ENCODE measurements at regions of chr10 and their contacts with region 1.

Region 1: DNA sequence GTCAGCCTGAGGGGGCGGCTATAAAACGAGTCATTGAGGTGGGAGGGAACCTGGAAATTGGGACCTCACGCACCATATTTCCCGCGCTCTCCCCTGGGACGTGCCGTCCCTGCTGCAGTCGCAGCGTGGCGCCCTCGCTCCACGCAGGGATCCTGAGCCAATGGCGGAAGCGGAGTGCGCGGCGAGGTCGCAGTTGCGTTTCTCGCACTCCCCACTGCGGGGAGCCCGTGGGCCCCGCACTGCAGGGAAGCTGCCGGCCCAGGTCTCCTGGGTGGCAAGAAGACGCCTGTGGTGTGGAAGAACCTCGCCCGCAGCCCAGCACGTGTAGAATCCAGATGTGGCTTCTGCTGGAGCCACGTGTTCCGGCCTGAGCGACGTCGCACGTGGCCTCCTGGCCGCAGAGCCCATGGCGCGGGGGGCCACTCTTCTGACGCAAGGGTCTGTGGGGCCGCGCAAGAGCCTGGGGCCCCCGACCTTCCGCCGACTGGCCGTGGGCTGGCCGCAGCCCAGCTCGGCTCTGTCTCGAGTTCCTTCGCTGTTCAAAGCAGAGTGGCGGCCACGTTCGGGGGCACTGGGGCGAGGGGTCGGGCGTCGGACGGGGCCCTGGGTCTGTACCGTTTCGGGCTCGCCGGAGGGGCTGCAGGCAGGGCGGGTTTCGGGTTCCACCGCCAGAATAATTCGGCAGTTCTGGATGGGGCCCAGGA is 26.4 kb downstream of the HIF1AN start:
- DNase-seq: peak; percentile 70 to 83 (median 80)
- ATAC-seq: peak; percentile 99
- H3K4me3 ChIP-seq: peak overlapping the region; percentile 25
- H3K4me3 Mint-ChIP-seq: peak overlapping the region; percentile 46 to 78 (median 70)
- H3K27ac ChIP-seq: no peak overlapping the region
- H3K27ac Mint-ChIP-seq: no peak overlapping the region
- H3K4me1 ChIP-seq: peaks cover 5 to 7% of the 10 kb centered on the region in 2 donors
- H3K4me1 Mint-ChIP-seq: peaks cover 0 to 28% (median 11%) of the 10 kb centered on the region in 7 donors
- H3K27me3 ChIP-seq: no peaks in the 10 kb centered on the region
- H3K27me3 Mint-ChIP-seq: peaks cover 17 to 41% (median 25%) of the 10 kb centered on the region in 5 donors

Region 2: DNA sequence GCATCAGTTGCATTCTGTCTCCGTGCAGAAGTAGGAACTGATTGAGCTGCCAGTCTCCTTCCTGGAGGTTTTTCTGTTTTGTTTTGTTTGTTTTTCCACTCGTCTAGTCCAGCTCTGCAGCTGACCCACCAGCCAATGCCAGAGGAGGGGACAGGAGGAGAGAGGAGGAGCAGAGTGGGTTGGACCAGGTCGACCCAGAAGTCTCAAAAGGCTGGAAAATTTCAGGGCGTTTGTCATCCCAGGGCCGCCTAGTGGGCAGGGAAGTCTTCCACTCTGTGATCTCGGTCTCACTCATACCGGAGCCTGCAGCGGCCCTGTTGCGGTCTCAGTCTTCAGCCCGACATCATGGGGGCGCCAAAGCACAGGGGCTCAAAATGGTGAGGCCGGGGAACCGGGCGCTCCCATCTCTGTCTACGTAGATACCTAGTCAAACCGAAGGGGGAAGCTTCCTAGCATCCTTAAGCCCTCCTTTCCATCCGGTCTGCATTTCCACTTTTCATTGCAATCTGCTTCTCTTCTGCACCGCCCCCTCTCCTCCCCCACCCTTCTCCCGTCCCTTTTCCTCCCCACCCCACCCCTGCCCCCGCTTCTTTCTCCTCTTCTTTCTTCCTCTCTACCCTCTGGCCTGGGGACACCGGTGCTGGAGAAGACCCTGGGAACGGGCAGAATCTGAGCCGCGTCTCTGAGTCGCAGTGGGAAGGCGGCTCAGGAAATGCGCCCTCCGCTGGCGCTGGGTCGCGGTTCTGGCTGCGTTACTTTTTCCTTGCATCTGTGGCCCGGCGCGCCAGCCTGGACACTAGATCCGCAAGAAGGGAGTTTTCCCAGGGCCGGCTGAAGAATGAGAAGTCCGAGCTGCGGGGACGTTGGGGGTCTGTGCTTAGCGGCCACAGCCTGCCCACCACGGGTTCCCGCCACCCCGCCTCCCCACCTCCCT is 167.0 kb after region 1 on chr10:
- CTCF ChIA-PET with region 1: no interaction called
- POLR2A ChIA-PET with region 1: no interaction called
- intact Hi-C with region 1: loop called in 1 of 2 experiments (anchors 5 kb)
- DNase-seq: no peak
- ATAC-seq: no peak
- H3K4me3 ChIP-seq: no peak overlapping the region
- H3K4me3 Mint-ChIP-seq: peak overlapping the region in 9 of 10 donors; percentile 21 to 82 (median 67)
- H3K27ac ChIP-seq: no peak overlapping the region
- H3K27ac Mint-ChIP-seq: no peak overlapping the region
- H3K4me1 ChIP-seq: peaks cover 13 to 18% of the 10 kb centered on the region in 2 donors
- H3K4me1 Mint-ChIP-seq: peaks cover 8 to 26% (median 22%) of the 10 kb centered on the region in 7 donors
- H3K27me3 ChIP-seq: peaks cover 2 to 9% of the 10 kb centered on the region in 2 donors
- H3K27me3 Mint-ChIP-seq: peaks cover 86 to 92% (median 88%) of the 10 kb centered on the region in 5 donors

Region 3: GRCh38 chr10:100827819-100828737 is 265.9 kb after region 1 on chr10:
- CTCF ChIA-PET with region 1: interaction called, 3 read pairs
- POLR2A ChIA-PET with region 1: no interaction called
- intact Hi-C with region 1: loop called in 1 of 2 experiments (anchors 1 kb)
- DNase-seq: peak in 3 of 9 donors; percentile 18 to 36 (median 29)
- ATAC-seq: peak; percentile 37
- H3K4me3 ChIP-seq: peak overlapping the region; percentile 56
- H3K4me3 Mint-ChIP-seq: peak overlapping the region; percentile 85 to 97 (median 88)
- H3K27ac ChIP-seq: no peak overlapping the region
- H3K27ac Mint-ChIP-seq: peak overlapping the region in 2 of 9 donors; percentile 14 to 50
- H3K4me1 ChIP-seq: peaks cover 9% of the 10 kb centered on the region in 2 donors
- H3K4me1 Mint-ChIP-seq: peaks cover 25 to 45% (median 31%) of the 10 kb centered on the region in 7 donors
- H3K27me3 ChIP-seq: peaks cover 11 to 34% of the 10 kb centered on the region in 2 donors
- H3K27me3 Mint-ChIP-seq: peaks cover 26 to 86% (median 47%) of the 10 kb centered on the region in 5 donors

Region 4: DNA sequence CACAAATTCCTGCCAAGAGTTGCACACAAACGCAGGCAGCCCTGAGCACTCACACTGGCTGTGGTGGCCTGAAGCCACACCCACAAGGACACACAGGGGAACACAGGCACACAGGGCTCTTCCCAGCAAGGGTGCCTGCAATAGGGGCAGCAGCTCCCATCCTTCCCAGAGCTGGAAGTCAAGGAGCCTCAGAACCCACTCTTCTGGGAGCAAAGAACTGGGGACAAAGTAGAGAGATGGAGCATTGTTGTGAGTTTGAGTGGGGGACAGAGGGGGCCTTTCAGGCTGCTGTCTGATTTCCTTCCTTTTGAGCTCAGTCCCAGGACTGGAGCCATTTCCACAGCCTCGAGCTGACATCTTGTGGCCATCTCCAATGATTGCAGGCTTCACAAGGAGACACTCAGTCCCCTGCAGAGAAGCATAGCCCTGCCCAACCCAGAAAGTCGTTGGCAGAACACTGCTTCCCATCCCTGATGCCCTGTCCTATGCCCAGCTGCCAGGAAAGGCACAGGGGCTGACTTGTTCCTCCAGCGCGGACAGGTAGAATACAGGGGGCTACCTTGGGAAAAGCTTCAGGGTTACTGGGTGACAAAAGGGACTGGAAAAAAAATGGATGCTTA is 316.2 kb after region 1 on chr10:
- CTCF ChIA-PET with region 1: interaction called, 4 read pairs
- POLR2A ChIA-PET with region 1: no interaction called
- intact Hi-C with region 1: loop called (anchors 1 to 2 kb)
- DNase-seq: peak in 2 of 9 donors; percentile 7 to 26
- ATAC-seq: no peak
- H3K4me3 ChIP-seq: no peak overlapping the region
- H3K4me3 Mint-ChIP-seq: no peak overlapping the region
- H3K27ac ChIP-seq: no peak overlapping the region
- H3K27ac Mint-ChIP-seq: peak overlapping the region in 1 of 9 donors; percentile 56
- H3K4me1 ChIP-seq: no peaks in the 10 kb centered on the region
- H3K4me1 Mint-ChIP-seq: peaks cover 0 to 6% (median 0%) of the 10 kb centered on the region in 7 donors
- H3K27me3 ChIP-seq: no peaks in the 10 kb centered on the region
- H3K27me3 Mint-ChIP-seq: peaks cover 0 to 23% (median 9%) of the 10 kb centered on the region in 5 donors

Region 5: GRCh38 chr10:100998991-100999741 is 437.0 kb after region 1 on chr10:
- CTCF ChIA-PET with region 1: no interaction called
- POLR2A ChIA-PET with region 1: no interaction called
- intact Hi-C with region 1: loop called in 1 of 2 experiments (anchors 5 kb)
- DNase-seq: peak; percentile 69 to 90 (median 82)
- ATAC-seq: peak; percentile 82
- H3K4me3 ChIP-seq: peak overlapping the region; percentile 87
- H3K4me3 Mint-ChIP-seq: peak overlapping the region; percentile 87 to 98 (median 92)
- H3K27ac ChIP-seq: peak overlapping the region; percentile 99
- H3K27ac Mint-ChIP-seq: peak overlapping the region; percentile 88 to 99 (median 94)
- H3K4me1 ChIP-seq: peaks cover 20 to 22% of the 10 kb centered on the region in 2 donors
- H3K4me1 Mint-ChIP-seq: peaks cover 15 to 37% (median 23%) of the 10 kb centered on the region in 7 donors
- H3K27me3 ChIP-seq: no peaks in the 10 kb centered on the region
- H3K27me3 Mint-ChIP-seq: no peaks in the 10 kb centered on the region

Region 6: DNA sequence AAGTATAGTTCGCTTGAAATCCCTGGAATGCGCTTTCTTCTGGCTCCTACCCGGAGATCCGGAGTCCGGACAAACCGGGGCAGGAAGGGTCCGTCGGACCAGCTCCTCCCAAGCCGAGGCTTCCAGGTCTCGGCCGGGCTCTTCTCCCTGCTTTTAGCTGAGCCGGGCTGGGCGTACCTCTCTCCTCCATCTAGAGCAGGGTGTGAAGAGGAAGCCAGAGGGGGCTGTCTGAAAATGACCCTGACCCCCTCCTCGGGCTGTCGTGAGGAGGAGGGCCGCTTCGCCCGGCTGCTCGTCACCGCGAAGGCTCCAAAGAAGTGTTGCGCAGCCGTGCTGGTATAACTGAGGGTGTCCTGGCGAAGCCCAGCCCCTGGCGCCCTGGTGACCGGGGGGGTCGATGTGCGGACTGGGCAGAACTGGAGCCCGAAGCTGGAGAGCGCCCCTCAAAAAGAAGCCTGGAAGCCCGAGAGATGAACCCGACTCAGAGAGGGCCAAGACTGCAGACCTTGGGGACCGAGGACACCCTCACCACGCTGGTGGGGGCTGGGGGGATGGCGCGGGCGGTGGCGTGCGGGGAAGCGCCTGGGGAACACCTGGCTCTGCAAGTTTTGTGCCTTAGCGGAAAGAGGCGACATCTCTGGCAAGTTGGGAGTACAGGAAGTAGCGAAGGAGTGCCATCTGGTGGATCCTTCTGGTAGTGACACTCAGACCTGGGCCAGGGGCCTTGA is 505.4 kb after region 1 on chr10:
- CTCF ChIA-PET with region 1: no interaction called
- POLR2A ChIA-PET with region 1: no interaction called
- intact Hi-C with region 1: loop called in 1 of 2 experiments (anchors 5 kb)
- DNase-seq: peak; percentile 45 to 79 (median 70)
- ATAC-seq: peak; percentile 71
- H3K4me3 ChIP-seq: peak overlapping the region; percentile 86
- H3K4me3 Mint-ChIP-seq: peak overlapping the region; percentile 84 to 94 (median 90)
- H3K27ac ChIP-seq: no peak overlapping the region
- H3K27ac Mint-ChIP-seq: peak overlapping the region in 1 of 9 donors; percentile 36
- H3K4me1 ChIP-seq: peaks cover 5 to 24% of the 10 kb centered on the region in 2 donors
- H3K4me1 Mint-ChIP-seq: peaks cover 5 to 31% (median 17%) of the 10 kb centered on the region in 7 donors
- H3K27me3 ChIP-seq: peaks cover 12 to 26% of the 10 kb centered on the region in 2 donors
- H3K27me3 Mint-ChIP-seq: peaks cover 40 to 58% (median 44%) of the 10 kb centered on the region in 5 donors